Dorsolateral prefrontal cortex (tissue), 120 donors: ENCODE measurements at regions of chr2 and their contacts with region 1.

Region 1: DNA sequence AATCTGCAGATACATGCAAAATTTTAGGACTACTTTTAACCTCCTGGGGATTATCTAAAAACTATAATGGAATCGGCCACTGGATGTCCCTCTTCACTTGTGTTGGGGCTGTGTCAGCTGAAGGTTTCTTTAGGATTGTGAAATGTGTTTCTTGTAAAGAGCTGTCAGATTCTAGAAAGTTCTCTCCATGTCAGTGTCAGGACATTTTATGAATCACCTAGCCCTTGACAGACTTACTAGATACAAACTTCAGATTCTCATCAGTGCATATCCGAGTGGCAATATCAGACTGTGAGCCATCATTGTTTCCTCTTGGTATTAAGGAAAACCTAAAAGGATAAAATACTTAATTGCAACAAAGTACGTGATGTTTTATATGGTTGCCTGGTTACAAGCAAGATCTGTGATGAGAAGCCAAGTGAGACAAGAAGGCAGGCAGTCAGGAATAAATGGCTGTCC is 107.3 kb downstream of the CPS1 start:
- DNase-seq: peak in 1 of 10 donors; percentile 10
- H3K4me3 ChIP-seq: no peak overlapping the region
- H3K27ac ChIP-seq: peak overlapping the region in 15 of 59 donors; percentile 1 to 67 (median 35)
- H3K27me3 ChIP-seq: no peaks in the 10 kb centered on the region
- CTCF ChIP-seq: peak in 54 of 56 donors; percentile 31 to 77 (median 56)

Region 2: GRCh38 chr2:211035548-211036185 is 372.0 kb after region 1 on chr2:
- intact Hi-C with region 1: loop called (anchors 5 to 10 kb)
- DNase-seq: no peak
- H3K4me3 ChIP-seq: no peak overlapping the region
- H3K27ac ChIP-seq: no peak overlapping the region
- H3K27me3 ChIP-seq: peaks cover 0 to 5% (median 0%) of the 10 kb centered on the region in 45 donors
- CTCF ChIP-seq: peak; percentile 33 to 87 (median 63)

Region 3: DNA sequence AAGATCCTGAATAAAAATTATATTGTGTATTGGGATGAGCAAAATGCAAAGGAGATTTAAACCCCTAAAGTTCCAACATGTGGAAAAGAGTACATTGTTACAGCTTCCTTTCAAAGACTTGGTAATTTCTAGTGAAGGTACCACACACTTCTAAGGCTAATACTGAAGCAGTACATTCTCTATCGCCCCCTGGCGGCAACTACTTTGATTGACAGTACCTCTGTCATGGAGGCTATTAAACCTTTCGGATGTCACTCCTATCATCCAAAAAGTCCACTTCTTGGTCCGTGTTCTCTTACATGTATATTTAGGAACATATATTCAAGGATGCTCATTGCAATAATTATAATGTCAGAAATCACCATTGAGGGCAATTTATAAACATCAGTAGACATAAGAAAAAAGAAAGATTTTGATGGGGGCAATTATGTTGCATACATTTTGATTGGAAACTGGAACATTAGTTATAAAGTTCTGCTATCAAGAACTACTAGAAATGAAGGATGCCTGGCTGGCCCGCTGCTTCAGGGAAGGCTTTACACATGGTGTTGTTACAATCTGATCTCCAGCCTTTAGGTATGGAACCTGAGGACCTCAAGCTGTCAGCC is 494.3 kb after region 1 on chr2:
- intact Hi-C with region 1: loop called in 1 of 2 experiments (anchors 2 kb)
- DNase-seq: peak; percentile 58 to 88 (median 75)
- H3K4me3 ChIP-seq: no peak overlapping the region
- H3K27ac ChIP-seq: no peak overlapping the region
- H3K27me3 ChIP-seq: peaks cover 0 to 2% (median 0%) of the 10 kb centered on the region in 45 donors
- CTCF ChIP-seq: peak; percentile 59 to 96 (median 83)